Motor neuron (in vitro differentiated cells): ENCODE measurements at regions of chr2 and their contacts with region 1.

Region 1: GRCh38 chr2:208072250-208072892 is 47.0 kb upstream of the PLEKHM3 start:
- ATAC-seq: peak; percentile 67 to 92 (median 77)
- H3K4me3 ChIP-seq: no peak overlapping the region
- H3K27ac ChIP-seq: no peak overlapping the region
- H3K4me1 ChIP-seq: no peaks in the 10 kb centered on the region

Region 2: GRCh38 chr2:207625018-207625907 is 447.1 kb before region 1 on chr2 and contains the start of gene METTL21A:
- in situ Hi-C with region 1: loop called in 1 of 9 experiments (anchors 25 kb)
- ATAC-seq: peak; percentile 76 to 87 (median 83)
- H3K4me3 ChIP-seq: peak within 1 kb of the TSS; percentile 72 to 88 (median 81)
- H3K27ac ChIP-seq: peak within 1 kb of the TSS; percentile 67 to 81
- H3K4me1 ChIP-seq: peaks cover 5 to 7% of the 10 kb centered on the region in 2 donors
- total RNA-seq, gene METTL21A: 9.2 to 25.2 (median 15.7) TPM